ENCODE measurements at regions of chr15 and their contacts with region 1.

Region 1: DNA sequence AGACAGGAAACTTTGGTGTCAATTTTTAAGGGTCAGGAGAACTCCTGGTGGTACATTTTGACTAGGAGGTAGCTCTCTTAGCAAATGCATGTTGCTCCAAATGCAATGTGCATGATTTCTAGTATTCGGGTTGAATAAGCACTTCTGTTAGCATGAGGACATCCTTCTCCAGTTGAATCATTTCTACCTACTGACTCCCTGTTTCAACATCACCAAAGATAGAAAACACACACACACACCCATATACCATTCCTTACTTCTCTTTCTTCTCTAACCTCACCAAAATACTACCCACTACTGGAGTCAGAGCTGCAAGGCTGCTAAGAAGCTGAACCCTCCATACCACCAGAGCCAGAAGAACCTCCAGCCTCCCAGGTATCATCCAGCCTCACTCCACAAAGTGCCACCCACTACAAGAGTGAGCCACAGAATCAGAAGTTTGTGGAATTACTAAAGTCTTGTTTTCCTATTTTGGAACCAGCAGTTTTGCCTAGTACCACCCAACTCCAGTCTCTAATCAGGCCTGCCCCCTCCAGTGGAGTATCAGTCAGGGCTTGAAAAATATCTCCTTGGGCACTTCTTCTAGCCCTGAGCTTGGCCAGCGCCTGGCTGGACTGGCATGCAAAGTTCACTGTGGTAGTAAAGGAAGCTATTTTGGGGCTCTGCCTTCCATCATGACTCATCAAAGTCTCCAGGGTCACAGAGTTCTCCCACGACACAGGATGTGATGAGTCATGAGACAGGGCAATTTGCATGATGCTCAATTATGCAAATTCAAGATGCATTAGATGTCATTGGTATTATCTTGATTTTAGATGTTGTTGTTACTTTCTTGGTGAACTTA is 110.2 kb downstream of the CYP19A1 start:
- DNase-seq: no peak
- ATAC-seq: peak; percentile 42
- H3K4me3 Mint-ChIP-seq: no peak overlapping the region
- H3K27ac Mint-ChIP-seq: peak overlapping the region; percentile 2
- H3K4me1 Mint-ChIP-seq: peaks cover 10% of the 10 kb centered on the region
- H3K27me3 Mint-ChIP-seq: no peaks in the 10 kb centered on the region
- CTCF ChIP-seq: no peak

Region 2: DNA sequence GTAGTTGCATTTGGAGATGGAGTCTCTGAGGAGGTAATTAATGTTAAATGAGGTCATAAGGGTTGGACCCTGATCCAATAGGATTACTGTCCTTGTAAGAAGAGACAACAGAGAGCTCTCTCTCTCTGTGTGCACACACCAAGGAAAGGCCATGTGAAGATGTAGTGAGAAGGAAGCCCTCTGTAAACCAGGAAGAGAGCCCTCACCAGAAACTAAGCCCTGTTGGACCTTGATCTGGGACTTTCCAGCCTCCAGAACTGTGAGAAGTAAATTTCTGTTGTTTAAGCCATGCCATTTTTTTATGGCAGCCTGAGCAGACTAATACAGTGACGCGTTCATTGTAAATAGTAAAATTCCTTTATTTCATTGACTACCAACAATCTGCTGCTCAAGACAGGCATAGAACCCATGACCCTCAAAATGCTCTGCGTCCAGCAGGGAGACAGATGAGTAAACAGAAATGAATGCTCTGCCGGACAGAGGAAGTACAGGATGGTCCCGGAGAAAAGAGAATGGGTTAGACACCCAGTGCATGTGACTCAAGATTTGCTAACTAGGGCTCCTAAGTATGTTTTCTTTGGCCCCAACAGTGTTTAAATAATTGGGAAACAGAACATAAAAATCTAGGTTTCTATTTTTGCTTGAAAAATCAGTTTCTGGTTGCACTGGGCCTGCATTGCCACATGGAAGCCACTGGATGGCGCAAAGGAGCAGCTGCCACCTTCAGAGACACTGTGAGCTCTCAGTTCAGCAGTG is 95.6 kb before region 1 on chr15:
- CTCF ChIA-PET with region 1: interaction called, 15 read pairs
- POLR2A ChIA-PET with region 1: no interaction called
- DNase-seq: peak; percentile 56
- ATAC-seq: peak; percentile 92
- H3K4me3 Mint-ChIP-seq: no peak overlapping the region
- H3K27ac Mint-ChIP-seq: peak overlapping the region; percentile 16; the same call in 1 of the 2 replicates
- H3K4me1 Mint-ChIP-seq: peaks cover 9% of the 10 kb centered on the region
- H3K27me3 Mint-ChIP-seq: no peaks in the 10 kb centered on the region
- CTCF ChIP-seq: peak; percentile 89

Region 3: GRCh38 chr15:51239748-51240465 is 11.7 kb after region 1 on chr15:
- CTCF ChIA-PET with region 1: interaction called, 21 read pairs
- POLR2A ChIA-PET with region 1: no interaction called
- DNase-seq: no peak
- ATAC-seq: peak; percentile 36
- H3K4me3 Mint-ChIP-seq: no peak overlapping the region
- H3K27ac Mint-ChIP-seq: no peak overlapping the region
- H3K4me1 Mint-ChIP-seq: peaks cover 49% of the 10 kb centered on the region
- H3K27me3 Mint-ChIP-seq: peaks cover 2% of the 10 kb centered on the region; the same call in 1 of the 2 replicates
- CTCF ChIP-seq: no peak

Region 4: DNA sequence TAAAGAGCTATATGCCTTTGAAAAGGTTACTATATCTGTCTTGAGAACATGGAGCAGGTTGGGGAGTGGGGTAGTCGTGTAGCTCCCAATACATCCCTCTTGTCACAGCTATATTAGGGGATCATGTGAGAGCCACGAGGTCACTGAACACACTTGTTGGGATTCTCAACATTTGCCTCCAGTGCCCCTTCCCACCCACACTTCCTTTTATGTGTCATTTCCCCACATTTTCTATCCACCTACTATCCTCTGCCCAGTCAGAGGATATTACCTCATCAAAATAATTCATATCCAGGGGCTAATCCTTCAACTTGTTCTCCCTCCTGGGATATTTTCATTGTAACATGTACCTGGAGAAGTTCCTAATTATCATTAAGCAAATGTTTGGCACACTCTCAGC is 25.2 kb after region 1 on chr15:
- CTCF ChIA-PET with region 1: no interaction called
- POLR2A ChIA-PET with region 1: no interaction called
- DNase-seq: no peak
- ATAC-seq: no peak
- H3K4me3 Mint-ChIP-seq: no peak overlapping the region
- H3K27ac Mint-ChIP-seq: no peak overlapping the region
- H3K4me1 Mint-ChIP-seq: no peaks in the 10 kb centered on the region
- H3K27me3 Mint-ChIP-seq: no peaks in the 10 kb centered on the region; the same call in 1 of the 2 replicates
- CTCF ChIP-seq: no peak

Region 5: DNA sequence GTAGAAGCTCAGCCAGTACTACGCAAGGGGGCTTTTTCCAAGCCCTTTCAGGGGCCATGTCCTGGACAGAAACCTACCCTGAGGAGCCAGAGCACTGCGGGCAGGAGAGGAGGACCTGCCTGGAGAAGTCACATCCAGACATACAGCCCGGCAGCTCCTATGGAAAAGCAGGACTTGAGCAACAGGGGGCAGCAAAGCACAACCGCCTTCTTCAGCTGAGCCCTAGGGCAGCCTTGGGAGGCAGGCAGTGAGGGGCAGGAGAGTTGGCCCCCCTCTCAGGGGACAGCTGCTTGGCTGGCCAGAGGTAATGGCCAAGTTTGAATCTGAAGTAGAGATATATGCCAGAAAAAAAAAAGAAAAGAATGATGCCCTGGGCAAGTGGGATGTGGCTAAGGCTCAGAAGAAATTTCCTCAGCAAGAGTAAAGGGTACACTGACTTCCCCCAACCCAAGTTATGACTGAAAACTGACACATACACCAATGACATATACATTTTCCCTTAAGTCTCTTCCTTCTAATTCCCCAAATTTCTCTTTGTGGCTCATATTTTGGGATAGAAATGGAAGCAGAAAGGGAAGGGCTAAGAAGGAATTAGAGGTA is 53.3 kb after region 1 on chr15:
- CTCF ChIA-PET with region 1: interaction called, 21 read pairs
- POLR2A ChIA-PET with region 1: no interaction called
- DNase-seq: peak; percentile 80
- ATAC-seq: peak; percentile 99
- H3K4me3 Mint-ChIP-seq: no peak overlapping the region
- H3K27ac Mint-ChIP-seq: no peak overlapping the region
- H3K4me1 Mint-ChIP-seq: no peaks in the 10 kb centered on the region
- H3K27me3 Mint-ChIP-seq: no peaks in the 10 kb centered on the region; the same call in 1 of the 2 replicates
- CTCF ChIP-seq: peak; percentile 58

Region 6: GRCh38 chr15:51380999-51381795 is 153.0 kb after region 1 on chr15:
- CTCF ChIA-PET with region 1: interaction called, 69 read pairs
- POLR2A ChIA-PET with region 1: no interaction called
- DNase-seq: peak; percentile 60
- ATAC-seq: peak; percentile 93
- H3K4me3 Mint-ChIP-seq: no peak overlapping the region
- H3K27ac Mint-ChIP-seq: no peak overlapping the region
- H3K4me1 Mint-ChIP-seq: peaks cover 4% of the 10 kb centered on the region
- H3K27me3 Mint-ChIP-seq: peaks cover 2% of the 10 kb centered on the region; the same call in 1 of the 2 replicates
- CTCF ChIP-seq: peak; percentile 80

Measured in WTC11 (cell line).